ENCODE measurements at regions of chr4 and their contacts with region 1.

Region 1: DNA sequence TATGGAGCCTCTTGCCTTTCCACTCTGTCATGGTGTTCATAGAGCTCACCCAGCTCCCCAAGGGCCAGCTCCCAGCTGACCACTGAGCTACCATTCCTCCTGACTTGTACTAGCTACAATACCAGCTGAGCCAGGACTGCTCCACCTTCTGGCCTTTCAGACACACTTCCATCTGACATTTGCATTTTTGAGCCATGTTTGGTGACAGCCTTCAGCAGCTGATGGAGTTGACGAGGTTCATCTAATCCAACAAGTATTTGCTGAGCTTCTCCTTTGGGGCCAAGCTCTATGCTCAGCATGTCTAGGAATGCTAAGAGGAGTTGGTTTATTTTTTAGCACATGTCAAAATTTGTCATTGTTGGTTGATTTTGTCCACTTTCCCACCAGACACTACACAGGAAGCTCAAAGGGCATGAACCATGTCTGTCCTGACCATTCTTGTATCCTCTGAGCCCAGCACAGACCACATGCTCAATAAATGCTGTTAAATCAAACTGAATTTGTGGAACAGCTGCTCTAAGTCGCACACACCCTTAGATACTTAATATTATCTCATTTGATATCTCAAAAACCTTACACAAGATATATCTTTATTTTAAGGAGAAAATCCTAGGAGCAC is 142.6 kb upstream of the PPARGC1A start:
- DNase-seq: peak; percentile 8
- ATAC-seq: no peak; the same call in 1 of the 2 replicates
- H3K4me3 ChIP-seq: no peak overlapping the region
- H3K27ac ChIP-seq: no peak overlapping the region
- H3K4me1 ChIP-seq: 0 out of 2 replicates have a peak, but pooled peaks cover 3% of the 10 kb centered on the region
- H3K27me3 ChIP-seq: no peaks in the 10 kb centered on the region
- CTCF ChIP-seq: no peak
- POLR2A ChIP-seq: no peak
- RAD21 ChIP-seq: no peak

Region 2: DNA sequence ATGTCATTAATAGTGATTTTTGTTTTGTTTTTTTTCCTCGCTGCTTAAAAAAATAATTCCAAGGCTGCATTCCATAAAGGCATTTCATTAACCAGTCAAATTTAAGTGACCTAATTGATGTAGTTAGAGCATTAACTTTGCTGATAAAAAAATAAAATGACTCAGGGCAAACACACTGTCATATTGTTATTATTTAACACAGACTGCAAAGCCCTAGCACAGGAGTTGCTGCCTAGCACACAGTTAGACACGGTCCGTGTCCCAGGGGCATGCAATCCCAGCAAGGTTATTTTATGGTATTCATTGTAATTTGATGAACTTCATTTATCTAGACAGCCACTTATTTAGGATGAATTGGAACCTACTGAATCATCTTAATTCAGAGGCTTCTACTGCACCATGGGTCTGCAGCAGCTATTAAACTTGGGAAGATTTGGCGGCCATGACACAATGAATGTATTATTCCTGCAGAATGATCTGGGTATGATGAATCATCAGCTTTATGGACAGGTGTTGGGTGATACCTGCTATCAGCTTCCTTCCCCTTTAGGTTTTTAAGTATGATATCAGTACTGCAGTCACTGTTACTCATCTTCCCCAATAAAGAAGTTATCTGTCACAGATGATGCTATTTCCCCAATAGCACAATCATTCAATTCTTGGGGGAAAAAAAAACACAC is 325.4 kb before region 1 on chr4:
- CTCF ChIA-PET with region 1: no interaction called
- POLR2A ChIA-PET with region 1: no interaction called
- dilution Hi-C with region 1: no loop called
- in situ Hi-C with region 1: no loop called
- intact Hi-C with region 1: no loop called
- DNase-seq: no peak
- ATAC-seq: no peak
- H3K4me3 ChIP-seq: no peak overlapping the region
- H3K27ac ChIP-seq: no peak overlapping the region
- H3K4me1 ChIP-seq: no peaks in the 10 kb centered on the region
- H3K27me3 ChIP-seq: peaks cover 2% of the 10 kb centered on the region
- CTCF ChIP-seq: no peak
- POLR2A ChIP-seq: no peak
- RAD21 ChIP-seq: no peak

Region 3: DNA sequence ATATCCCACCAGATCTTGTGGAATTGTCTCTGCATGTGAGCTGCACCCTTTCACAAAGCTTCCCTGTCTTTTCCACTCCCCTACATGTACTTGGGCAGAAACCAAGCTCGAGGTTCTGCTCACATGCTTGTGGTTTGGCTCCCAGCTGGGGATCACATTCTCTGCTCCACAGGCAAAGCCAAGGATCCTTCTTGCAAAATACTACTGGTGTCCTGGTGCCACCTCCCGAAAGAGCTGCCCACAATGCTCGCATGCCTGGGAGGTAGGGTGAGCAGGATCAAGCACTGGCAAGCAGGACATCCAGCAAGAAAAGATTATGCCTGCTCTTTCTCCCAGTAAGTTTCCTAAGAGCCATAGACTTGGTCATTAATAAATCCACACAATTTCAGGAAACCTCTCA is 97.6 kb before region 1 on chr4:
- CTCF ChIA-PET with region 1: no interaction called
- POLR2A ChIA-PET with region 1: no interaction called
- dilution Hi-C with region 1: no loop called
- in situ Hi-C with region 1: no loop called
- intact Hi-C with region 1: loop called (anchors 5 kb)
- DNase-seq: peak; percentile 87
- ATAC-seq: peak; percentile 89
- H3K4me3 ChIP-seq: no peak overlapping the region
- H3K27ac ChIP-seq: no peak overlapping the region
- H3K4me1 ChIP-seq: peaks cover 3% of the 10 kb centered on the region; the same call in 1 of the 2 replicates
- H3K27me3 ChIP-seq: no peaks in the 10 kb centered on the region; the same call in 1 of the 2 replicates
- CTCF ChIP-seq: no peak
- POLR2A ChIP-seq: no peak
- RAD21 ChIP-seq: no peak

Region 4: DNA sequence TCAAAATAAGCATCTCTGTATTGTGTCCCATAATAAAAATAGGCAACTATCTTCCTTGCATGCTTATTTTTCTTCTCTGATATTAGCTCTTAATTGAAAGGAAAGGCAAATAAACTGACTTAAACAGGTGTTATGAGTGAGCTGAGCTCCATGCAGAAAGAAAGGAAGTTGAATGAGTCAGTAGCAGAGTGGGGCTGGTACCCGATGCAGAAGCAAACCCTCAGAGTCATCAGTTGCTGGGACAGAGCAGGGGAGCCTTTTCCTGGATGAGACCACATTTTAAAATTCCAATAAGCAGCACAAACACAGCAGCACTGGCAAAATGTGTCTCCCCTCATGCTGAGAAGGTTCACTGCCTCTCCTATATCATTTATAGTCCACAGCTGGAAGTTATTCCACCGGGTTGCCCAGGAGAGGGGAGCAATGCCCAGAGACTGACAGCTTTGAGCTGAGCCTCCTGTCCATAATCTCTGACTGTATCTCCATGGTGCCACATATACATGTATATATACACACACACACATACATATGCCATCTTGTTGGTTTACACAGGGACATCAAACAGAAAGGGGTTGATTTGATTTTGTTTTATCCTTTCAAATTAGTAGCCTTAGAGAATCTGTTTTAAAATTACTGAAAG is 131.7 kb after region 1 on chr4:
- CTCF ChIA-PET with region 1: no interaction called
- POLR2A ChIA-PET with region 1: no interaction called
- dilution Hi-C with region 1: no loop called
- in situ Hi-C with region 1: no loop called
- intact Hi-C with region 1: no loop called
- DNase-seq: peak; percentile 39
- ATAC-seq: peak; percentile 80; the same call in 1 of the 2 replicates
- H3K4me3 ChIP-seq: no peak overlapping the region
- H3K27ac ChIP-seq: no peak overlapping the region
- H3K4me1 ChIP-seq: no peaks in the 10 kb centered on the region
- H3K27me3 ChIP-seq: no peaks in the 10 kb centered on the region; the same call in 1 of the 2 replicates
- CTCF ChIP-seq: no peak
- POLR2A ChIP-seq: no peak
- RAD21 ChIP-seq: no peak

Measured in IMR-90 (cell line).